ENCODE measurements at regions of chr6 and their contacts with region 1.

Region 1: GRCh38 chr6:89080542-89081422 is at the start of gene PNRC1:
- DNase-seq: peak; percentile 99
- H3K4me3 ChIP-seq: peak within 1 kb of the TSS; percentile 99
- H3K27ac ChIP-seq: peak within 1 kb of the TSS; percentile 98
- H3K27me3 ChIP-seq: peaks cover 3% of the 10 kb centered on the region
- CTCF ChIP-seq: no peak
- polyA plus RNA-seq, gene PNRC1: 21.0 and 22.6 TPM in 2 replicates

Region 2: GRCh38 chr6:88963139-88964090 is 117.4 kb before region 1 on chr6 and contains the start of gene RNGTT:
- CTCF ChIA-PET with region 1: interaction called, 4 read pairs
- POLR2A ChIA-PET with region 1: interaction called, 13 read pairs
- DNase-seq: peak; percentile 90
- H3K4me3 ChIP-seq: peak within 1 kb of the TSS; percentile 99
- H3K27ac ChIP-seq: peak within 1 kb of the TSS; percentile 68
- H3K27me3 ChIP-seq: no peaks in the 10 kb centered on the region
- CTCF ChIP-seq: no peak
- polyA plus RNA-seq, gene RNGTT: 7.8 and 11.2 TPM in 2 replicates

Region 3: GRCh38 chr6:89035252-89036106 is 45.3 kb before region 1 on chr6:
- CTCF ChIA-PET with region 1: interaction called, 5 read pairs
- POLR2A ChIA-PET with region 1: interaction called, 21 read pairs
- DNase-seq: peak; percentile 86
- H3K4me3 ChIP-seq: peak overlapping the region; percentile 8
- H3K27ac ChIP-seq: peak overlapping the region; percentile 95
- H3K27me3 ChIP-seq: no peaks in the 10 kb centered on the region
- CTCF ChIP-seq: no peak

Region 4: GRCh38 chr6:89145787-89146646 is 65.2 kb after region 1 on chr6 and contains the start of gene PM20D2:
- CTCF ChIA-PET with region 1: interaction called, 4 read pairs
- POLR2A ChIA-PET with region 1: interaction called, 20 read pairs
- DNase-seq: no peak
- H3K4me3 ChIP-seq: peak within 1 kb of the TSS; percentile 66
- H3K27ac ChIP-seq: no peak within 1 kb of the TSS
- H3K27me3 ChIP-seq: peaks cover 4% of the 10 kb centered on the region
- CTCF ChIP-seq: no peak
- polyA plus RNA-seq, gene PM20D2: 4.6 and 6.5 TPM in 2 replicates

Measured in AG04450 (cell line).